ENCODE measurements at regions of chr14 and their contacts with region 1.

Region 1: GRCh38 chr14:49915085-49915484 is 22.2 kb downstream of the ARF6 start:
- DNase-seq: no peak
- ATAC-seq: no peak

Region 2: DNA sequence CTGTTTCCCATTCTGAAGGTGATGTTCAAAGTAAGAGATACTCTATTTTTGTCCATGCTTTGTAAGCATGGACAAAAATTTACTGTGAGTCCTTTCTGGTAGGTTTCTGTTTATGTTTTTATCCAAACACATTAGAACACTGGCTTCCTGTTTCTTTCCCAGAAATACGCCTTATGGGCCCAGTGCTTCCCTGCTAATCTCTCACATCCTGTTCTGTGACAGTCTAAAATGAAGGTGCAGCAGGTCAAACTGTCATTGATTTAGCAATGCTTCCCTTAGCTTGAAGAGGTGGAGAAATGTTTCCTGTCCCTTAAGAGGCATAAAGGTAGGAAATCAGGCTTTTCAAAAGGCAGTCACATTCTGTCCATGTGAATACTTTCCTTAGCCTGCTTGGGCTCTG is 634.5 kb before region 1 on chr14:
- intact Hi-C with region 1: no loop called
- DNase-seq: no peak
- ATAC-seq: no peak

Region 3: GRCh38 chr14:50045039-50045711 is 130.1 kb after region 1 on chr14:
- intact Hi-C with region 1: loop called in 1 of 2 experiments (anchors 10 kb)
- DNase-seq: peak; percentile 88
- ATAC-seq: peak; percentile 91 to 92

Region 4: DNA sequence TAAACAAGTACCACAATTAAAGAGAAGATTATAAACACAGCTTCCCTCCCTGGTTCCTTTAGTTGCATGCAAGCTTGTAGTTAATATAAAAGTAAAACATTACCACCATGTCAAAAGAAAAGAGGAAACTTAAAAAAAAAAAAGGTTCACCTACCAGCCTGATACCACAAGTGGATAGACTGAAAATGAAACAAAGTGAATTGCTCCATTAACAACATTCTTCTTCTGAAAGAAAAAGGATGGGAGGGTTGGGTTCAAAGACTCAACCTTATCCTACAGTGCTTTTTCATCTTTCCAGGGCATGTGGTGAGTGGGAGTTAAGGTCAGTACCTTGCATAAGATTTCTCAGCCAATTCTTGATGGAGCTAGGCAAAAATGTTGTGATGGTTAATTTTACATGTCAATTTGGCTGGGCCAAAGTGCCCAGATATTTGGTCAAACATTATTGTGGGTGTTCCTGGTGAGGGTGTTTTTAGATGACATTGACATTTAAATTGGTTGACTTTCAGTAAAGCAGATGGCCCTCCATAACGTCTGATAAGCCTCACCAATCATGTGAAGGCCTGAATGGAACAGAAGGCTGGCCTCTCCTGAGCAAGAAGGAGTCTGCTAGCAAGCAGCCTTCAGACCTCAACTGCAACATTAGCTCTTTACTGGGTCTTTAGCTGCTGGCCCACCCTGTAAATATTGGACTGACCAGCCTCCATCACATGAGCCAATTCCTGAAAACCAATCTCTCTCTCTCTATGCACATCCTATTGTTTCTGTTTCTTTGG is 172.4 kb after region 1 on chr14:
- intact Hi-C with region 1: no loop called
- DNase-seq: no peak
- ATAC-seq: no peak

Measured in left cardiac atrium (tissue), 4 donors.